ENCODE measurements at regions of chr5 and their contacts with region 1.

Region 1: GRCh38 chr5:86880785-86881492 is 263.2 kb downstream of the COX7C start:
- DNase-seq: peak; percentile 55
- ATAC-seq: peak; percentile 97
- H3K4me3 Mint-ChIP-seq: no peak overlapping the region
- H3K27ac Mint-ChIP-seq: no peak overlapping the region
- H3K4me1 Mint-ChIP-seq: no peaks in the 10 kb centered on the region
- H3K27me3 Mint-ChIP-seq: peaks cover 5% of the 10 kb centered on the region

Region 2: DNA sequence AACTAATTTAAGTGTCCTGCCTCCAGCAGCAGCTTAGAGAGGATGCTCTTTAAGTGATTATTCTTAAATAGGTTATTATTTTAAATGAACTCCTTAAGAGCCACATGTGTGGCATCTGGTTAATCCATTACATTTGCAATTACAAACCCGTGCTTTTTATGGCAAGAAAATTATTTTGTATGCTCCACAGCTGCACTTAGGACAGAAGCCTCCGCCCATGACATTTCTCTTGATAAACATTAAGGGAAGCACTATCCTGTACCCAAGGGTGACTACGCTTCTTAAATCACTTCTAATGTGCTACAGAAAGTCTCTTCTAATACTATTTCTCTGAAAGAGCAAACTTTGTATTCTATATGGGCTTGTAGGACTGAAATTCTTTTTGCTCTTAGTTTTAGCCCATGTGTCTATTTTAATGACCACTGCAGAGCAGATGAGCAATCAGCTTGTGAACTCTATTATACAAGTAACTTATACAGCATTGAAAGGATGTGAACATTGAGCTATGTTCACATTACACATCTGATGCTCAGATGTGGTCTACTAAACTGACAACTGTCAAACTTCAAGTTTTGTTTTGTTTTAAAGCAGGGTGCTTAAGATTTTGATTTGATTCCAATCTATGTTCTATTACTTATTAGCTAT is 39.8 kb before region 1 on chr5:
- CTCF ChIA-PET with region 1: no interaction called
- POLR2A ChIA-PET with region 1: no interaction called
- intact Hi-C with region 1: no loop called
- DNase-seq: no peak
- ATAC-seq: no peak
- H3K4me3 Mint-ChIP-seq: no peak overlapping the region
- H3K27ac Mint-ChIP-seq: no peak overlapping the region
- H3K4me1 Mint-ChIP-seq: no peaks in the 10 kb centered on the region
- H3K27me3 Mint-ChIP-seq: peaks cover 2% of the 10 kb centered on the region

Region 3: DNA sequence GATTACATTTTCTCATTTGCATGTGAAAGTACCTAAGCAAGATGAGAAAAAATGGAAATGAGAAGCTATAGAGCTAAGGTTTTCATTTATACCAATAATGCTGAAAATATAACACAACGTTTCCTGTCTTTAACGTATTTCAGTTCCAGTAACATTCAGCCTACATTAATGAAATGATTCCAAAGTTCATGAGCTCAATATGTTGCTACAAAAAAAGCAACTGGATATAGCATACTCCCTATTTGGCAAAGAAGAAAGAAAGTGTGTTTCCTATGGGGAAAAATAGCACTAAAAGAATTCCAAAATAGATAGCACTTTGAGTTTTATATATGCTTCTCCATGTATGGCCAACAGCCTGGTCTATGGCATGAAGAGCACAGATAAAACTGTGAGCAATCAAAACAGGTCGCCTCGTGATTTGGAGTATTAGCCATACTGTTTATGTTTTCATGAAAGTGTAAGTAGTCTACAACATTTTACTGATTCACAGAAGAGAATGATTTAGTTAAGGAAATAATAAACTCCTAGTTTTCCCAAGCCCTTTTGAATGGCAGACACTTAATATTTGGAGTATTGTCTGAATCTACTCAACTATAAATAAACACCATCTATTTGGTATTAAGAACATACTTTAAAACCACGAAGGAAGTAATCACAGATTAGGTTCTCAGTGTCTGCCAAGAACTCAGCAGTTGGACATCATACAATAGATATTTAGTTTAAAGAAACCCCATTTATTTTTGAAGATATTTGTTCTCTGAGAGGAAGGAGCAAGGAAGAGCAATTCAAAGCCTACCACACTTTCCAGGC is 128.0 kb after region 1 on chr5:
- CTCF ChIA-PET with region 1: interaction called, 4 read pairs
- POLR2A ChIA-PET with region 1: no interaction called
- intact Hi-C with region 1: loop called (anchors 1 to 2 kb)
- DNase-seq: no peak
- ATAC-seq: no peak
- H3K4me3 Mint-ChIP-seq: no peak overlapping the region
- H3K27ac Mint-ChIP-seq: no peak overlapping the region
- H3K4me1 Mint-ChIP-seq: no peaks in the 10 kb centered on the region
- H3K27me3 Mint-ChIP-seq: no peaks in the 10 kb centered on the region

Region 4: GRCh38 chr5:87029951-87030350 is 149.0 kb after region 1 on chr5:
- CTCF ChIA-PET with region 1: no interaction called
- POLR2A ChIA-PET with region 1: no interaction called
- intact Hi-C with region 1: no loop called
- DNase-seq: no peak
- ATAC-seq: no peak
- H3K4me3 Mint-ChIP-seq: no peak overlapping the region
- H3K27ac Mint-ChIP-seq: no peak overlapping the region
- H3K4me1 Mint-ChIP-seq: peaks cover 25% of the 10 kb centered on the region
- H3K27me3 Mint-ChIP-seq: no peaks in the 10 kb centered on the region

Region 5: GRCh38 chr5:87151547-87151946 is 270.6 kb after region 1 on chr5:
- CTCF ChIA-PET with region 1: no interaction called
- POLR2A ChIA-PET with region 1: no interaction called
- intact Hi-C with region 1: no loop called
- DNase-seq: no peak
- ATAC-seq: peak; percentile 44
- H3K4me3 Mint-ChIP-seq: no peak overlapping the region
- H3K27ac Mint-ChIP-seq: no peak overlapping the region
- H3K4me1 Mint-ChIP-seq: peaks cover 5% of the 10 kb centered on the region
- H3K27me3 Mint-ChIP-seq: no peaks in the 10 kb centered on the region

Measured in activated CD4-positive, alpha-beta T cell treated with anti-CD3 and anti-CD28 coated beads for 36 hours (primary cell).